Heart right ventricle (tissue), 16 donors: ENCODE measurements at regions of chr17 and their contacts with region 1.

Region 1: DNA sequence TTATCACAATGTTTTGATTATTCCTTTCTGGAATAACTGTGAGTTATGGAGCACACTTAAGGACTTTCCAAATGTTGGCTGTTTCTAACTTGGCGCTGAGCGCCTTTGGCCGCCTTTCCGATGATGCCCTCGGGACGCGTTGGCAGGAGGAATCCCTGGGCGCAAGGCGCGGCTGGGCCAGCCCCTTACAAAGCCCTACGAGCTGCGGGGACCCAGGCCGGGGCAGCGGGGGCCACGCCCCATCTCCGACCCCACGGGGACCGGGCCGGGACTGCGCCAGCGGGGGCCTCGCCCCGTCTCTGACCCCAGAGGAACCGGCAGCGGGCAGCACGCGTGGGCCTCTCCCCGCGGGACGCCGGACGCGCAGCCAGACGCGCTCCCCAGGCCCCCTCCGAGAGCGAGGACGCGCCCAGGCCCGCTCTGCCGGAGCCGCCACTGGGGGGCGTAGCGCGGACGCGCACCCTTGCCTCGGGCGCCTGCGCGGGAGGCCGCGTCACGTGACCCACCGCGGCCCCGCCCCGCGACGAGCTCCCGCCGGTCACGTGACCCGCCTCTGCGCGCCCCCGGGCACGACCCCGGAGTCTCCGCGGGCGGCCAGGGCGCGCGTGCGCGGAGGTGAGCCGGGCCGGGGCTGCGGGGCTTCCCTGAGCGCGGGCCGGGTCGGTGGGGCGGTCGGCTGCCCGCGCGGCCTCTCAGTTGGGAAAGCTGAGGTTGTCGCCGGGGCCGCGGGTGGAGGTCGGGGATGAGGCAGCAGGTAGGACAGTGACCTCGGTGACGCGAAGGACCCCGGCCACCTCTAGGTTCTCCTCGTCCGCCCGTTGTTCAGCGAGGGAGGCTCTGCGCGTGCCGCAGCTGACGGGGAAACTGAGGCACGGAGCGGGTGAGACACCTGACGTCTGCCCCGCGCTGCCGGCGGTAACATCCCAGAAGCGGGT is at the start of gene GAA:
- DNase-seq: peak; percentile 81 to 91
- ATAC-seq: peak; percentile 80 to 94 (median 91)
- H3K4me3 ChIP-seq: peak within 1 kb of the TSS; percentile 75 to 97 (median 92)
- H3K27ac ChIP-seq: peak within 1 kb of the TSS; percentile 75 to 97 (median 93)
- H3K4me1 ChIP-seq: peaks cover 0 to 23% (median 14%) of the 10 kb centered on the region in 9 donors
- H3K27me3 ChIP-seq: no peaks in the 10 kb centered on the region
- CTCF ChIP-seq: peak; percentile 72 to 97 (median 86)
- total RNA-seq, gene GAA: 29.6 to 67.7 (median 52.1) TPM

Region 2: GRCh38 chr17:79997011-79997660 is 104.1 kb before region 1 on chr17:
- intact Hi-C with region 1: no loop called
- DNase-seq: no peak
- ATAC-seq: no peak
- H3K4me3 ChIP-seq: peak overlapping the region in 1 of 10 donors; percentile 26
- H3K27ac ChIP-seq: peak overlapping the region in 2 of 10 donors; percentile 29 to 85
- H3K4me1 ChIP-seq: peaks cover 18 to 44% (median 22%) of the 10 kb centered on the region in 9 donors
- H3K27me3 ChIP-seq: no peaks in the 10 kb centered on the region
- CTCF ChIP-seq: no peak

Region 3: DNA sequence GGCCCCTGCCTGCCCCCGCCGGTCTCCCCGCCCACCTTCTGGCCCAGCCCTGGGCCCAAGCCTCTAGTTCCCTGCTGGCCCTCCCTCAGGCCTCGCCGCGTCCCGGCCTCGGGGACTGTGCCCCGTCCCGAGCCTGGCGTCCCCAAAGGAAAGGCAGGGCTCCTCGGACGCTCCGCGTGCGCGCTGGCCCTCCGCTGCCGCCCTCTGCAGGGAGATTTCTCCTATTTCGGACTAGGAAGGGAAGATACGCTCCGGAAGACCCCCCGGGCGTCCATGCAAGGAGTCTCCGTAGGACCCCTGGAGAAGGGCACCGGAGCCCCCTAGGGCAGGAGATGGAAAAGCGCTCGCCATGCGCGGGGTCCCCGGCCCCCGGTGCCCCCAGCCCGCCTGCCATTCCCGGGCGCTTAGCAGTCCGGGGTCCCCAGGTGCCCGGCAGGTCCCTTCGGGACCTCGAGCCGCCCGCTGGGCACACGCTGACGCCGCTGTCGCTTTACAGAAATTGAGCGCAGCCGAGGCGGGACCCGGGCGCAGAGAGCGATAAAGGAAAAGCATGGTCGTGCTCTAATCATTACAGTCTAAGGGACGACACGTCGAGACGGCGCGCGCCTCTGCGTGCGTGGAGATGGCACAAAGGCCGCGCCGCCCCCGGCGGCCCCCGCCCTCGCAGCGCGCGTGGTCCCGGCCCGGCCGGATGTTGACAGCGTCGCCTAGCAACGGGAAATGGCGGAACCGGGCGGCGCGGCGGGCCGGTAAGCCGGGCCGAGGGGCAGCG is 65.1 kb before region 1 on chr17 and contains the start of gene CCDC40:
- intact Hi-C with region 1: loop called in 1 of 10 experiments (anchors 1 kb)
- DNase-seq: peak; percentile 85 to 90
- ATAC-seq: peak; percentile 94 to 98 (median 96)
- H3K4me3 ChIP-seq: peak within 1 kb of the TSS; percentile 74 to 100 (median 88)
- H3K27ac ChIP-seq: peak within 1 kb of the TSS; percentile 79 to 96 (median 92)
- H3K4me1 ChIP-seq: peaks cover 2 to 28% (median 12%) of the 10 kb centered on the region in 9 donors
- H3K27me3 ChIP-seq: peaks cover 0 to 31% (median 0%) of the 10 kb centered on the region in 7 donors
- CTCF ChIP-seq: peak in 4 of 9 donors; percentile 6 to 48 (median 22)
- total RNA-seq, gene CCDC40: 3.4 to 8.9 (median 6.8) TPM

Region 4: DNA sequence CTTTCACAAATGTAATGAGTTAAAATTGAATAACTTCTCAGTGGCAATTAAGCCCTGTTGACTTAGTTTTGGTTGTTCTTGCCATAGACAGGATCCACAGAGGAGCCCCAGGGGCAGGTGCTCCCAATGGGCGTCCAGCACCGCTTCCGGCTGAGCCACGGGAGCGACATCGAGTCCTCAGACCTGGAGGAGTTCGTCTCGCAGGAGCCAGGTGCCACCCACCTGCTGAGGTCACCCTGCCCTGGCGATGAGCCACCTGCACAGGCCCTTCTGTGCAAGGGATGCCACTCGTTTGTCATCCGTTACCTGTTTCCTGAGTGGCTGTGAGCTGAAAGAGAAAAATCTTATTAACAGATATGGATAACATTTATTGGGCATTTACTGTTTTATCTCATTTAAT is 54.1 kb before region 1 on chr17:
- intact Hi-C with region 1: no loop called
- DNase-seq: no peak
- ATAC-seq: no peak
- H3K4me3 ChIP-seq: no peak overlapping the region
- H3K27ac ChIP-seq: no peak overlapping the region
- H3K4me1 ChIP-seq: no peaks in the 10 kb centered on the region
- H3K27me3 ChIP-seq: no peaks in the 10 kb centered on the region
- CTCF ChIP-seq: no peak

Region 5: GRCh38 chr17:80254396-80255251 is 153.3 kb after region 1 on chr17:
- intact Hi-C with region 1: loop called in 2 of 10 experiments (anchors 2 to 5 kb)
- DNase-seq: no peak
- ATAC-seq: peak in 2 of 8 donors; percentile 10 to 43
- H3K4me3 ChIP-seq: peak overlapping the region in 1 of 10 donors; percentile 6
- H3K27ac ChIP-seq: peak overlapping the region in 3 of 10 donors; percentile 4 to 93 (median 20)
- H3K4me1 ChIP-seq: peaks cover 0 to 38% (median 2%) of the 10 kb centered on the region in 9 donors
- H3K27me3 ChIP-seq: no peaks in the 10 kb centered on the region
- CTCF ChIP-seq: no peak

Region 6: DNA sequence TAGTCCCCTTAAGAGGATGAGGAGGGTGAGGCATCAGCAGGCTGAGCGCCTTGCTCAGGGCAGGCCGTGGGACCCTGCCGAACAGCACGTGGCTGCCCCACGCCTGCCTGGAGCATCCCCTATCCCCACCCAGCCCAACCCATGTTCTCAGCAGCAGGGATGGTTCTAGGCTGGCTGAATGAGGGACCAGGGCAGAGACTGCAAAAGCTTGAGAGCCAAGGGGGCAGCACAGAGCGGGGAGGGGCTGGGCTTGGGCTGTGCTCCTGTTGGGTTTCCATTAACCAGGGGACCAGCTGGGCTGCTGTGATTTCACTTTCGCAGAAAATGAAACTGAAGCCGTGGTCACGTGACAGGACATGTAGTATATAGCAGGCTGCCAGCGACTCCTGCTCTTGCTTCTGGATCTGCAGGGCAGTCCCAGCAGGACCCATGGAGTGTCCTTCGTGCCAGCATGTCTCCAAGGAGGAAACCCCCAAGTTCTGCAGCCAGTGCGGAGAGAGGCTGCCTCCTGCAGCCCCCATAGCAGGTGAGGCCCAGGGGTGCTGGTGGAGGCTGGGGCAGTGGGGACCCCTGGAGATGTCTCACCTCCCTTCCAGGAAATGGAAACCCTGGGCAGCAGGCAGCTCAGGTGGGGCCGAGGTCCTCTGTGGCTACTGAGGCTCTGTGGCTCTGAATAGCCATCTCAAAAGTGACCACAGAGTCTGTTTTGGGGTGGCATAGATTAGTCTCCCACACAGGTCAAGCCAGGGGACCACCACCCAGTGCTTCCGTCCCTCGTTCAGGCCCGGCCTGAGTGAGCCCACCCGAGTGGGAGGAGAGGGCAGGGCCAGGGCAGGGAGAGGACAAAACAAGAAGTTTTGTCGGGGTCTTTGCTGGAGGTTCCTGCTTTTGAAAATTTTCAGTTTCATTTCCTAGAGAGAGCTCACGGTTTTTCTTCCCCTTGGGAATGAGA is 162.3 kb after region 1 on chr17:
- intact Hi-C with region 1: loop called in 2 of 10 experiments (anchors 2 to 5 kb)
- DNase-seq: peak; percentile 63 to 92
- ATAC-seq: peak; percentile 44 to 88 (median 74)
- H3K4me3 ChIP-seq: peak overlapping the region; percentile 26 to 100 (median 62)
- H3K27ac ChIP-seq: peak overlapping the region in 9 of 10 donors; percentile 98 to 100 (median 99)
- H3K4me1 ChIP-seq: peaks cover 13 to 69% (median 47%) of the 10 kb centered on the region in 9 donors
- H3K27me3 ChIP-seq: no peaks in the 10 kb centered on the region
- CTCF ChIP-seq: peak in 5 of 9 donors; percentile 4 to 40 (median 27)